RWPE1 (cell line): ENCODE measurements at regions of chr19 and their contacts with region 1.

Region 1: GRCh38 chr19:30564551-30565011 is 192.4 kb downstream of the ZNF536 start:
- DNase-seq: no peak
- H3K27ac ChIP-seq: no peak overlapping the region
- CTCF ChIP-seq: no peak

Region 2: GRCh38 chr19:28920269-28921066 is 1644.1 kb before region 1 on chr19:
- CTCF ChIA-PET with region 1: interaction called, 13 read pairs
- POLR2A ChIA-PET with region 1: no interaction called
- DNase-seq: no peak
- H3K27ac ChIP-seq: no peak overlapping the region
- CTCF ChIP-seq: no peak